ENCODE measurements at regions of chr2 and their contacts with region 1.

Region 1: DNA sequence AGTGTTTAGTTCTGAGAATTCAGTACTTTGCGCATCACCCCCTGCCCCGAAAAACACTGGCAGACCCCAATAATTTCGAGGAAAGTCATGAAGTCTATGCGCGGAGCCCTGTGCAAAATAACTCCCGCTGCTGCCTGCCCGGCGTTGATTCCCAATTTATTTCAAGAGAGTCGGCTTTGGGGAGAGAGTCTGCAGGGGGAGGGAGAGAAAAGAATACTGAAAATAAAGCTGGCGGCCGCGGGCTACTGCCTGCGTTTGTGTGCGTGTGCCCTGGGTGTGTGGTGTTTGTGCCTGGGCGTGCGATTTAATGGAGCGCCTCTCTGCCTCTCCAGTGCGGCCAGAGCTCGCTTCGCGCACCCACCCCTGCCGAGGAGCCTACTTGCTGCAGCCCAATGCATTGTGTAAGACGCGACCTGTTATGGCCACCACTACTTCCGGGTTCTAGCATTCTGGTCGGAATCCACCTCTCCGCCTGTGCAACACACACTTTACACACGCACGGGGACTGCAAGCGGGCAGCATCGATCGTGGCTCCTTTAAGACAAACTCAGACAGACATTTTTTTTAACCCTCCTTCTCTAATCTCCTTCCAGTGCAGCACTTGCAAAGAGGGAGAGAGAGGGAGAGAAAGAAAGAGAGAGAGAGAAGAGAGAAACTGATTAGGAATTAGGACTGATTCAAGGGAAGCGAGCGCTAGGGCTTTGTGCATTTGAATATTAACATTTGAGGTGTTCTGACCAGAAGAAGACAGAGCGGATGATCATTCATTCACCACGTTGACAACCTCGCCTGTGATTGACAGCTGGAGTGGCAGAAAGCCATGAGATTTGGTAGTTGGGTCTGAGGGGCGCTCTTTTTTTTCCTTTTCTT is at the start of gene MEIS1:
- DNase-seq: peak; percentile 81 to 90
- H3K4me3 ChIP-seq: peak within 1 kb of the TSS; percentile 72
- H3K27ac ChIP-seq: peak within 1 kb of the TSS; percentile 48
- H3K4me1 ChIP-seq: peaks cover 13% of the 10 kb centered on the region
- H3K27me3 ChIP-seq: no peaks in the 10 kb centered on the region
- CTCF ChIP-seq: no peak
- total RNA-seq, gene MEIS1: 5.4 and 9.1 TPM in 2 replicates

Region 2: GRCh38 chr2:66370849-66371248 is 64.1 kb before region 1 on chr2:
- CTCF ChIA-PET with region 1: no interaction called
- POLR2A ChIA-PET with region 1: no interaction called
- intact Hi-C with region 1: no loop called
- DNase-seq: no peak
- H3K4me3 ChIP-seq: no peak overlapping the region
- H3K27ac ChIP-seq: no peak overlapping the region
- H3K4me1 ChIP-seq: no peaks in the 10 kb centered on the region
- H3K27me3 ChIP-seq: no peaks in the 10 kb centered on the region
- CTCF ChIP-seq: no peak

Region 3: DNA sequence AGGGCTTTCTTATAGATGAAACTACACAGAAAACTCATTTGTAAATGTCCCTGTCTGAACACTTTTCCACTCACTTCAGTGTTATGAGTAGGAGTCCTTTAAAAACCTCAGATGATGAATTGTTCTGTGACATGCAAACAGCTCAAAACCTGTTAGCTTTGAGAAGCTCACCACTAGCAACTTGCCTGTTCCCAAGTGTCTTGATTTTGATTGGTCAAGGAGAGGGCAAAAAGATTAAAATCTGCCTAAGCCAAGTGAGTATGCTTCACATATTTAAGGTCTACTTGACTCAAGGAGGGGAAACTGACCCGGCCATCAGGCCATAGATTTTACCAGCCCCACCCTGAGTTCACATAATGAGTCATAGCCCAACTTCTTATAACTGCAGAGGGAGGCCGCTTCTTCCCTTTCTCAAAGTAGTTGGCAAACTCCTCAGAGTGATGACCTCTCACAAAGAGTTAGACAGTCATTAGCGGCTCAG is 45.2 kb before region 1 on chr2:
- CTCF ChIA-PET with region 1: no interaction called
- POLR2A ChIA-PET with region 1: no interaction called
- intact Hi-C with region 1: no loop called
- DNase-seq: peak; percentile 5 to 64
- H3K4me3 ChIP-seq: no peak overlapping the region
- H3K27ac ChIP-seq: no peak overlapping the region
- H3K4me1 ChIP-seq: peaks cover 15% of the 10 kb centered on the region
- H3K27me3 ChIP-seq: no peaks in the 10 kb centered on the region
- CTCF ChIP-seq: no peak

Region 4: DNA sequence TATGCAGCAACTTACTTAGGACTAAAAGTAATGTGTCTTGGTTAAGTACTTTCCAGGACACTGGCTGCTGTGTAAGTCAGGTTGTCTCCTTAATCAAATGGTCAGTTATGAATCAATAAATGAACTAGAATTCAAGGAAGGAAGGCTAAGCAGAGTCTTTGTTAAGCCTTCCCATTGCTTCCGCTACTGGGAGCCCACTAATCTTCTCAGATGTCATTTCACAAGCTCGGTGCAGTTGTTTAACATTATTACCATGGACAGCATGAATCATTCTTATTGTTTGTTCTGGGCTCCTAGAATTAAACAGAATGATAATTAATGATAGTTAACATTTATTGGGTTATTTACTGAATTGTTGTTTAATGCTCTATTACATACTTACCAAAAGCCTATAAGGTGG is 26.0 kb before region 1 on chr2:
- CTCF ChIA-PET with region 1: interaction called, 17 read pairs
- POLR2A ChIA-PET with region 1: no interaction called
- intact Hi-C with region 1: no loop called
- DNase-seq: no peak
- H3K4me3 ChIP-seq: no peak overlapping the region
- H3K27ac ChIP-seq: no peak overlapping the region
- H3K4me1 ChIP-seq: no peaks in the 10 kb centered on the region
- H3K27me3 ChIP-seq: no peaks in the 10 kb centered on the region
- CTCF ChIP-seq: no peak

Region 5: GRCh38 chr2:66490588-66491001 is 55.7 kb after region 1 on chr2:
- CTCF ChIA-PET with region 1: interaction called, 9 read pairs
- POLR2A ChIA-PET with region 1: no interaction called
- intact Hi-C with region 1: loop called (anchors 1 kb)
- DNase-seq: peak; percentile 26 to 70
- H3K4me3 ChIP-seq: no peak overlapping the region
- H3K27ac ChIP-seq: peak overlapping the region; percentile 47; the same call in 1 of the 2 replicates
- H3K4me1 ChIP-seq: peaks cover 36% of the 10 kb centered on the region
- H3K27me3 ChIP-seq: no peaks in the 10 kb centered on the region
- CTCF ChIP-seq: no peak

Region 6: DNA sequence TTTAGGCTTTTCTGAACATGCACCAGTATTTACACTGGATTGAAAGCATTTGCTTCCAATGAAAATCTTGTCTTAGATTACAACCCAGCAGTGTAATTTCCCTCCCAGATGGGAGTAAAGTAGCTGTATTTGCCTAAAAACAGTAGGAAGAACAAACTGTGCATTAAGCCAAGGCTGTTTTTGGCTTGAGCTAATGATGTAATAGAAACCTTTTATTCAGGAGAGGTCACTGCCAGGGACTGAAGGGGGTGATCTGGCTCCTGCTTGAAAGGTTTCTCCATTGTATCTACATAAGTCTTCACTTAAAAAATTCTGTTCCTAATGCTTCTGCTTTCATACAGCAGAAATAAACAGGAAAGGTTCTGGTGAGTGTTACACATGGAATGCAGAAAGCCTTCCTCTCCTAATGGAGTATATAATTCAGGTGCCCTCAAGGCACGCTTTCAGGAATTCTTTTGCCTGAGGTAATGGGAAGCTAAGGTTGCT is 74.5 kb after region 1 on chr2:
- CTCF ChIA-PET with region 1: no interaction called
- POLR2A ChIA-PET with region 1: interaction called, 7 read pairs
- intact Hi-C with region 1: loop called (anchors 1 kb)
- DNase-seq: peak; percentile 48 to 89
- H3K4me3 ChIP-seq: no peak overlapping the region
- H3K27ac ChIP-seq: peak overlapping the region; percentile 68
- H3K4me1 ChIP-seq: peaks cover 23% of the 10 kb centered on the region
- H3K27me3 ChIP-seq: no peaks in the 10 kb centered on the region
- CTCF ChIP-seq: no peak

Region 7: DNA sequence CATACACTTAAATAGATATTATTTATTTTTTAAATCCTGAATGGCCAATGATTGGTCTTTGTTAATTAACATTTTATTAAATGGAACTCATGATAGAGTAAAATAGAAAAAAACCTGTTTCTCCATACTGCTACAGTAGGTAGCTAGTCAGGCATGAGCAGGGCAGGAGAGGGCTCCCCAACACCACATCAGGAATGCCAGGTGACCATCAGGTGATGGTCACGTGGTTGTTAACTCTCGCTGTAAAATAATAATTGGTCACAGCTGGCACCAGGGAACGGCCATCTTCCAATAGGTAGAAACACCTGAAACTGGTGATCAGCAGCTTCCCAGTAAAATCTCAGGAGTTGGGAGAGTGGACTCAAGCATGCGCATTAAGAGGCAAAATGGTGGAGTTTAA is 172.2 kb after region 1 on chr2:
- CTCF ChIA-PET with region 1: no interaction called
- POLR2A ChIA-PET with region 1: no interaction called
- intact Hi-C with region 1: no loop called
- DNase-seq: no peak
- H3K4me3 ChIP-seq: no peak overlapping the region
- H3K27ac ChIP-seq: no peak overlapping the region
- H3K4me1 ChIP-seq: no peaks in the 10 kb centered on the region
- H3K27me3 ChIP-seq: no peaks in the 10 kb centered on the region
- CTCF ChIP-seq: no peak

Region 8: GRCh38 chr2:67397143-67397986 is 962.5 kb after region 1 on chr2 and contains the start of gene ETAA1:
- CTCF ChIA-PET with region 1: interaction called, 12 read pairs
- POLR2A ChIA-PET with region 1: interaction called, 4 read pairs
- intact Hi-C with region 1: no loop called
- DNase-seq: peak; percentile 75 to 90
- H3K4me3 ChIP-seq: peak within 1 kb of the TSS; percentile 78
- H3K27ac ChIP-seq: peak within 1 kb of the TSS; percentile 57
- H3K4me1 ChIP-seq: peaks cover 34% of the 10 kb centered on the region
- H3K27me3 ChIP-seq: no peaks in the 10 kb centered on the region
- CTCF ChIP-seq: no peak
- total RNA-seq, gene ETAA1: 17.1 and 25.3 TPM in 2 replicates